Mammary epithelial cell (primary cell): ENCODE measurements at regions of chr12 and their contacts with region 1.

Region 1: GRCh38 chr12:96327346-96327745 is 72.9 kb downstream of the CDK17 start:
- DNase-seq: no peak
- H3K4me3 ChIP-seq: no peak overlapping the region
- H3K27ac ChIP-seq: no peak overlapping the region
- H3K4me1 ChIP-seq: no peaks in the 10 kb centered on the region
- H3K27me3 ChIP-seq: no peaks in the 10 kb centered on the region
- CTCF ChIP-seq: no peak

Region 2: GRCh38 chr12:96375841-96376604 is 48.7 kb after region 1 on chr12:
- CTCF ChIA-PET with region 1: no interaction called
- dilution Hi-C with region 1: loop called (anchors 5 kb)
- in situ Hi-C with region 1: no loop called
- intact Hi-C with region 1: no loop called
- DNase-seq: no peak
- H3K4me3 ChIP-seq: no peak overlapping the region
- H3K27ac ChIP-seq: no peak overlapping the region
- H3K4me1 ChIP-seq: no peaks in the 10 kb centered on the region
- H3K27me3 ChIP-seq: no peaks in the 10 kb centered on the region
- CTCF ChIP-seq: no peak